ENCODE measurements at regions of chr7 and their contacts with region 1.

Region 1: DNA sequence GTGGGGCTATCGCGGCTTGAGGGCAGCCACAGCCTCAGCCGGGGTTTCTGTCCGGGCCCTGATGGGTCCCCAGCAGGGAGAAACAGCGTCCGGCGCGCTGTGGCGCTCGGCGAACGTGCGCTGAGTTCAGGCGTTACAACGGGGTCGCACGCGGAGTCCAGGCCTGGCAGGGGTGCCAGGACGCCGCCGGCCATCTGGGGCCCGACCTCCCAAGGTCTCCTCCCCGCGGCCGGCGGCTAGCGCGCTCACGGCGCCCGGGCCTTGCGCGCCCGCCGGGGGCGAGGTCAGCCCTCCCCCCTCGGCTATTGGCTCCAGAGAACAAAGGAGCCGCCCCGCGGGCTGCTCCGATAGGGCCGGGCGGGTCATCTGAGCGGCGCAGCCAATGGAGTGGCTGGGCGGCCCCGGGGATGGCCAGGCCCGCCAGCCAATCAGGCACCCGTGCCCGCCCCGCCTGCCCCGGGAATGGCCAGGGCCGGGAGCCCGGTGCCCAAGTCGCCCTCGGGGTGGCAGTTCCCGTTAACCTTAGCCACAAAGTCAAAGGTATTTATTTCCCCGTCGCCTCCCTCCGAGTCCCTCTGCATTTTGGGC is at the start of gene ZNF775:
- DNase-seq: peak; percentile 95 to 98
- H3K4me3 ChIP-seq: peak within 1 kb of the TSS; percentile 95
- H3K4me3 Mint-ChIP-seq: peak within 1 kb of the TSS; percentile 87
- H3K27ac Mint-ChIP-seq: peak within 1 kb of the TSS; percentile 89
- H3K4me1 ChIP-seq: peaks cover 58% of the 10 kb centered on the region
- H3K4me1 Mint-ChIP-seq: peaks cover 48% of the 10 kb centered on the region
- H3K27me3 ChIP-seq: no peaks in the 10 kb centered on the region
- H3K27me3 Mint-ChIP-seq: no peaks in the 10 kb centered on the region
- CTCF ChIP-seq: no peak
- total RNA-seq, gene ZNF775: 4.0 and 4.4 TPM in 2 replicates

Region 2: DNA sequence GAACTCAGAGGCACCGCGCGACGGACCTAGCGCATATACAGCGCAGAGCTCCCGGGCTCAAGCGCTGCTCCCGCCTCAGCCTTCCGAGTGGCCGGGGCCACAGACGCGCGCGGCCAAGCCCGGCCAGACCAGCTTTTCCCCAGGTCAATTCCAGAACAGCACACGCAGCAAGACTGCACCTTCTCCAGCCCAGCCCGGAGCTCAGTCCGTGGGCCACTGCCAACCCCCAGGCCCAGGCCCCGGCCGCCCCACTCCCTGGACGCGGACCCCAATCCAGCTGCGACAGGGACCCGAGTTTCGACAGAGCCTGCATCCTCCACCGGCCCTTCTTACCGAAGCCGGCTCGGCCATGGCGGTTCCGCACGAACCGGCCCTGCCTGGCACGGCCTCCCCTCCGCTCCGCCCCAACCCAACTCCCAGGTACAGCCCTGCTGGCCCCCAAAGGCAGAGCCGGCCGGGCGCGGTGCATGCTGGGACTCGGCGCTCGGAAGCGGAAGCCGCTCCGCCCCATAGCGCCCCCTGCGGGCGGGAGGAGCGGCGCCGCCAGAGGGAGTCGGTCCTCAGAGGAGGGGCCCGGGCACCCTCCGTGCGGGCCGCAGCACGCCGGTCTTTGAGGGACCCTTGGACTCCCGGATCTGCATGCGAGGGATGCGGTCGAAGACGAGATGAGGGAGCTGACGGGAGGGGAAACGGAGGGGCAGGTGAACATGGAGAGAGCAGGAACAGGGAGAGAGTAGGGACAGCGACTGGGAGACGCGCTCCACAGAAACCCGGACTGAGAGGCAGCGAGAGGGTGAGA is 1252.9 kb before region 1 on chr7 and contains the start of gene ZNF425:
- CTCF ChIA-PET with region 1: no interaction called
- POLR2A ChIA-PET with region 1: no interaction called
- intact Hi-C with region 1: no loop called
- DNase-seq: peak; percentile 93 to 97
- H3K4me3 ChIP-seq: peak within 1 kb of the TSS; percentile 74
- H3K4me3 Mint-ChIP-seq: peak within 1 kb of the TSS; percentile 75
- H3K27ac Mint-ChIP-seq: peak within 1 kb of the TSS; percentile 84
- H3K4me1 ChIP-seq: peaks cover 7% of the 10 kb centered on the region; the same call in 1 of the 2 replicates
- H3K4me1 Mint-ChIP-seq: peaks cover 11% of the 10 kb centered on the region
- H3K27me3 ChIP-seq: no peaks in the 10 kb centered on the region
- H3K27me3 Mint-ChIP-seq: no peaks in the 10 kb centered on the region
- CTCF ChIP-seq: peak; percentile 94
- total RNA-seq, gene ZNF425: 2.6 and 4.0 TPM in 2 replicates

Region 3: GRCh38 chr7:150322833-150323681 is 55.9 kb before region 1 on chr7 and contains the starts of genes ACTR3C and LRRC61:
- CTCF ChIA-PET with region 1: interaction called, 3 read pairs
- POLR2A ChIA-PET with region 1: interaction called, 5 read pairs
- intact Hi-C with region 1: loop called (anchors 2 kb)
- DNase-seq: peak; percentile 81 to 87
- H3K4me3 ChIP-seq: peak within 1 kb of the TSS; percentile 93
- H3K4me3 Mint-ChIP-seq: peak within 1 kb of the TSS; percentile 95
- H3K27ac Mint-ChIP-seq: peak within 1 kb of the TSS; percentile 92
- H3K4me1 ChIP-seq: peaks cover 27% of the 10 kb centered on the region
- H3K4me1 Mint-ChIP-seq: peaks cover 19% of the 10 kb centered on the region
- H3K27me3 ChIP-seq: no peaks in the 10 kb centered on the region
- H3K27me3 Mint-ChIP-seq: no peaks in the 10 kb centered on the region
- CTCF ChIP-seq: peak; percentile 35 to 57
- total RNA-seq, gene ACTR3C: 8.0 and 9.2 TPM in 2 replicates
- total RNA-seq, gene LRRC61: 32.4 and 35.8 TPM in 2 replicates

Region 4: DNA sequence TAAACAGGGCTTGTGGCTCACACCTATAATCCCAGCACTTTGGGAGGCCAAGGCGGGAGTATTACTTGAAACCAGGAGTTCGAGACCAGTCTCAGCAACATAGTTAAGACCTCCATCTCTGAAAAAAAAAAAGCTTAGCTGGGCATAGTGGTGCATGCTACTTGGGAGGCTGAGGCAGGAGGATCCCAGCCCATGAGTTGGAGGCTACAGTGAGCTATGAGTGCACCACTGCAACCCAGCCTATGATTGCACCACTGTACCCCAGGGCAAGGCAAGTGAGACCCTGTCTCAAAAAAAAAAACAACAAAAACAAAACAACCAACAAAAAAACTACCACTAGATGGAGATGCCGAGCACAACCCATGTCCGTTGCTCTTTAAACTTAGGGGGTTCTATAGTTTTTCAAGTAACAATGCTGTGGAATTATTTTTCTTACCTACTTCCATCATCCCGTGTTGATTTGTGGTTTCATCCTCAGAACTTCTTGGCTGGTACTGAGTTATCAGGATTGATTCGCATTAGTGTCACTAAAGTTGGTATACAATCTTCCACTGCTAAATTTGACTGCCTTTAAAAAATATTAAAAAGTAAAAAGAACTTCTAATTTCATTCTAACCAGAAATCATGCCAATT is 22.6 kb before region 1 on chr7:
- CTCF ChIA-PET with region 1: interaction called, 3 read pairs
- POLR2A ChIA-PET with region 1: no interaction called
- intact Hi-C with region 1: loop called (anchors 1 kb)
- DNase-seq: peak in 1 of 2 experiments; percentile 42
- H3K4me3 ChIP-seq: no peak overlapping the region
- H3K4me3 Mint-ChIP-seq: no peak overlapping the region
- H3K27ac Mint-ChIP-seq: no peak overlapping the region
- H3K4me1 ChIP-seq: no peaks in the 10 kb centered on the region
- H3K4me1 Mint-ChIP-seq: peaks cover 11% of the 10 kb centered on the region
- H3K27me3 ChIP-seq: no peaks in the 10 kb centered on the region
- H3K27me3 Mint-ChIP-seq: no peaks in the 10 kb centered on the region
- CTCF ChIP-seq: peak; percentile 68 to 73

Region 5: GRCh38 chr7:150368096-150368883 is 10.7 kb before region 1 on chr7 and contains the start of gene REPIN1:
- CTCF ChIA-PET with region 1: interaction called, 9 read pairs
- POLR2A ChIA-PET with region 1: interaction called, 29 read pairs
- intact Hi-C with region 1: loop called (anchors 1 kb)
- DNase-seq: peak; percentile 95 to 96
- H3K4me3 ChIP-seq: peak within 1 kb of the TSS; percentile 91
- H3K4me3 Mint-ChIP-seq: peak within 1 kb of the TSS; percentile 88
- H3K27ac Mint-ChIP-seq: peak within 1 kb of the TSS; percentile 99
- H3K4me1 ChIP-seq: peaks cover 17% of the 10 kb centered on the region
- H3K4me1 Mint-ChIP-seq: peaks cover under 1% of the 10 kb centered on the region
- H3K27me3 ChIP-seq: no peaks in the 10 kb centered on the region
- H3K27me3 Mint-ChIP-seq: no peaks in the 10 kb centered on the region
- CTCF ChIP-seq: no peak
- total RNA-seq, gene REPIN1: 141 and 148 TPM in 2 replicates

Region 6: DNA sequence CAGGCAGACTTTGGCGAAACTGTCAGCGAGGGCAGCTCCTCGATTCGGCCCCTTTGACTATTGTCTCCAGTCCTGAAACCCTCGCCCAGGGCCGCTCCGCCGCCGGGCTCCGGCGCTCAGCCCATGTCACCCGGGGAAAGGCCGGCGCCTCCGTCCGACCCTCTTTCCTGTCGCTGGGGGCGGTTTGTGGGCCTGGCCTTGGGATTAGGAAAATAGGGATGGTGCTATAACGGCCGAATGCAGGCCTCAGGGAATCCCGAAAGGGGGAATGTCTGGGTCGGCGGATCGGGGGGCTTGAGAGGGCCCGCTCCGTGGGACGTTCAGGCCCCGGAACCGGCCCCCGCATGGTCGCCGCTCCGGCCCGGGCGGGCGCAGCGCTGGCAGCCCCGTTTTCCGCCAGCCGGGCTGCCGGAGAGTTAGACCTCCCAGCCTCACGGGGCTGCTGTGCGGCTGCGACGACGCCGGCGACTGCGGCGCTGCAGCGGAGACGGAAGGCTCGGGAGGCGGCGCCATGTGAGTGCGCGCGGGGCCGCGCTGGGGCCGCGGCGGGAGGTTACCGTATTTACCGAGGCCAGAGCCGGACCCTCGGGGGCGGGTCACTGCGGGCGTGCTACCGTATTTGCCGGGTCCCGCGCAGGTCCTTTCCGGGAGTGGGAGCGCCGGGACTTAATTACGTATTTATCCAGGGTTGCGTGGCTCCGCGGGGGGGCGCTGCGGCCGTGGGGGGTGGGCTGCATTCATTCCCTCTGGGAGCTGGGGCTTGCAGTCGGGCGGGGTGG is 26.0 kb after region 1 on chr7:
- CTCF ChIA-PET with region 1: interaction called, 7 read pairs
- POLR2A ChIA-PET with region 1: interaction called, 5 read pairs
- intact Hi-C with region 1: loop called (anchors 1 kb)
- DNase-seq: peak; percentile 90 to 93
- H3K4me3 ChIP-seq: peak overlapping the region; percentile 83
- H3K4me3 Mint-ChIP-seq: peak overlapping the region; percentile 88
- H3K27ac Mint-ChIP-seq: peak overlapping the region; percentile 45
- H3K4me1 ChIP-seq: peaks cover 49% of the 10 kb centered on the region
- H3K4me1 Mint-ChIP-seq: peaks cover 42% of the 10 kb centered on the region
- H3K27me3 ChIP-seq: no peaks in the 10 kb centered on the region
- H3K27me3 Mint-ChIP-seq: no peaks in the 10 kb centered on the region
- CTCF ChIP-seq: peak in 1 of 2 experiments; percentile 18

Region 7: GRCh38 chr7:150489782-150490181 is 110.8 kb after region 1 on chr7:
- CTCF ChIA-PET with region 1: no interaction called
- POLR2A ChIA-PET with region 1: no interaction called
- intact Hi-C with region 1: no loop called
- DNase-seq: no peak
- H3K4me3 ChIP-seq: no peak overlapping the region
- H3K4me3 Mint-ChIP-seq: no peak overlapping the region
- H3K27ac Mint-ChIP-seq: no peak overlapping the region
- H3K4me1 ChIP-seq: no peaks in the 10 kb centered on the region
- H3K4me1 Mint-ChIP-seq: no peaks in the 10 kb centered on the region
- H3K27me3 ChIP-seq: no peaks in the 10 kb centered on the region
- H3K27me3 Mint-ChIP-seq: peaks cover 5% of the 10 kb centered on the region
- CTCF ChIP-seq: no peak

Region 8: GRCh38 chr7:150514748-150515222 is 135.8 kb after region 1 on chr7 and contains the start of gene GIMAP7:
- CTCF ChIA-PET with region 1: no interaction called
- POLR2A ChIA-PET with region 1: no interaction called
- intact Hi-C with region 1: no loop called
- DNase-seq: no peak
- H3K4me3 ChIP-seq: no peak within 1 kb of the TSS
- H3K4me3 Mint-ChIP-seq: no peak within 1 kb of the TSS
- H3K27ac Mint-ChIP-seq: no peak within 1 kb of the TSS
- H3K4me1 ChIP-seq: no peaks in the 10 kb centered on the region
- H3K4me1 Mint-ChIP-seq: no peaks in the 10 kb centered on the region
- H3K27me3 ChIP-seq: no peaks in the 10 kb centered on the region
- H3K27me3 Mint-ChIP-seq: peaks cover 11% of the 10 kb centered on the region
- CTCF ChIP-seq: no peak
- total RNA-seq, gene GIMAP7: not detected in 2 replicates

Region 9: DNA sequence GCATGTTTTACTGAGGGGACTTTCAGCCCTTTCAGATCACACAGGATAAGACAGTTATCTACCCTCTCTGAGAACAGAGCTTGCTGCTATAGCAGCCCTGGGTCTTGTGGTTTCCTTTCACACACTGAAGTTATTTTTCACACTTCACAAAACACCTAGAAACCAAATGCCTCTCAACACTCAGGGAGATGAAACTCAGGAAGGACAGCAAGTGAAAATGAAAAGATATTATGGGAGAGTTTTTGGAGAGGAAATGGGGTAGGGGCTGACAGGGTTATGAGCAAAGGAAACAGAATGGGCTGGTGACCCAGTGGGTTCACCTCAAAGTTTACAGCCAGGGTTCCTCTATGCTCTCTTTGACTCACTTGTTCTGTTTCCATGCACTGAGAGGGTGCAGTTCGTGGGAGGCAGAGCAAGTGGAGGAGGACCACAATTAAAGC is 289.5 kb after region 1 on chr7:
- CTCF ChIA-PET with region 1: no interaction called
- POLR2A ChIA-PET with region 1: no interaction called
- intact Hi-C with region 1: no loop called
- DNase-seq: no peak
- H3K4me3 ChIP-seq: no peak overlapping the region
- H3K4me3 Mint-ChIP-seq: no peak overlapping the region
- H3K27ac Mint-ChIP-seq: no peak overlapping the region
- H3K4me1 ChIP-seq: no peaks in the 10 kb centered on the region
- H3K4me1 Mint-ChIP-seq: no peaks in the 10 kb centered on the region
- H3K27me3 ChIP-seq: no peaks in the 10 kb centered on the region
- H3K27me3 Mint-ChIP-seq: peaks cover 2% of the 10 kb centered on the region
- CTCF ChIP-seq: no peak